Dendritic cell treated with granulocyte-macrophage colony-stimulating factor and Interleukin-4, amounts not matched to agents 40 ng/mL and 50 ng/mL, for 4 days (primary cell): ENCODE measurements at regions of chr9 and their contacts with region 1.

Region 1: DNA sequence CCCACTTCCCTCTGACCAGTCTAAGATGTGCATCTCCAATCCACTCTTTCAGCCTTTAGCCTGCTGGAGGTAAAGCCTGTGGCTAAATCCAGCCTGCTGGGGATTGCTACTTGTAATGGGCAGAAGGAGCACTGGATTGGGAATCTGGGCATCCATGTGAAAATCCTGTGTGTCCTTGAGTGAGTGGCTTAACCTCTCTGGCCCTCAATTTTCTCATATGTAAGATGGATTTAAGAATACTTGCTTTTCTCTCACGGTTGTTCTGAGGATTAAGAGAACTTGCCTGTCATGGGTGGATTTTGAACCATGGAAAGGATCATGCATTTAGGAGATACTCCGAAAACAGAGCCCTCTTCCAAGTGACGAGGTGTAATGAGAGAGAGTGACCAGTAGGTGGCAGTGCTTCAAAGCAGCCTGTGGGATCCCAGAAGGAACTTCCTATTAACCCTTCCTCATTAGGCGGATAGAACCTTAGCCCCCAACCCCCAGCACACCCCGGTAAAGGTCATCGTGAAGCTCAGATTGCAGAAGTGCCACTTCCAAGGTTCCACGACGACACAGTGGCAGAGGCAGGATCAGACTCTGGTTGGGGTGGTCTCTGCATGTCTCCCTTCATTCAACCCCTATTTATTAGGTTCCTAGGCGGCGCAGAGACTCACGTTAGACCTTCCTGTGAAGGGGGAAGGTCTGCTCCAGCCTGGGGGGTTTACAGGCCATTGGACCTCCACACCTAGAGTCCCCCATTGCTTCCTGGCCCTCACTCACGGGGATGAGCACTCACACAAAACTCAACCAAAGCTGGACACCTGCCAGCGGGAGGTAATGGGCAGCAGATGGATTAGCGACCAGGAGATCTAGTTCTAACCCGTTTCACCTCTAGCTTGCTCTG is 68.7 kb upstream of the ZNF618 start:
- H3K4me3 Mint-ChIP-seq: peak overlapping the region; percentile 53
- H3K27ac Mint-ChIP-seq: no peak overlapping the region
- H3K4me1 Mint-ChIP-seq: peaks cover 5% of the 10 kb centered on the region
- H3K27me3 Mint-ChIP-seq: peaks cover 3% of the 10 kb centered on the region

Region 2: GRCh38 chr9:113593682-113594281 is 213.6 kb before region 1 on chr9:
- intact Hi-C with region 1: no loop called
- H3K4me3 Mint-ChIP-seq: peak overlapping the region; percentile 45
- H3K27ac Mint-ChIP-seq: peak overlapping the region; percentile 18
- H3K4me1 Mint-ChIP-seq: peaks cover 46% of the 10 kb centered on the region
- H3K27me3 Mint-ChIP-seq: no peaks in the 10 kb centered on the region

Region 3: GRCh38 chr9:113876151-113876992 is 69.0 kb after region 1 on chr9 and contains the start of gene ZNF618:
- intact Hi-C with region 1: loop called (anchors 1 kb)
- H3K4me3 Mint-ChIP-seq: peak within 1 kb of the TSS; percentile 93
- H3K27ac Mint-ChIP-seq: peak within 1 kb of the TSS; percentile 89
- H3K4me1 Mint-ChIP-seq: peaks cover 10% of the 10 kb centered on the region
- H3K27me3 Mint-ChIP-seq: peaks cover 11% of the 10 kb centered on the region

Region 4: DNA sequence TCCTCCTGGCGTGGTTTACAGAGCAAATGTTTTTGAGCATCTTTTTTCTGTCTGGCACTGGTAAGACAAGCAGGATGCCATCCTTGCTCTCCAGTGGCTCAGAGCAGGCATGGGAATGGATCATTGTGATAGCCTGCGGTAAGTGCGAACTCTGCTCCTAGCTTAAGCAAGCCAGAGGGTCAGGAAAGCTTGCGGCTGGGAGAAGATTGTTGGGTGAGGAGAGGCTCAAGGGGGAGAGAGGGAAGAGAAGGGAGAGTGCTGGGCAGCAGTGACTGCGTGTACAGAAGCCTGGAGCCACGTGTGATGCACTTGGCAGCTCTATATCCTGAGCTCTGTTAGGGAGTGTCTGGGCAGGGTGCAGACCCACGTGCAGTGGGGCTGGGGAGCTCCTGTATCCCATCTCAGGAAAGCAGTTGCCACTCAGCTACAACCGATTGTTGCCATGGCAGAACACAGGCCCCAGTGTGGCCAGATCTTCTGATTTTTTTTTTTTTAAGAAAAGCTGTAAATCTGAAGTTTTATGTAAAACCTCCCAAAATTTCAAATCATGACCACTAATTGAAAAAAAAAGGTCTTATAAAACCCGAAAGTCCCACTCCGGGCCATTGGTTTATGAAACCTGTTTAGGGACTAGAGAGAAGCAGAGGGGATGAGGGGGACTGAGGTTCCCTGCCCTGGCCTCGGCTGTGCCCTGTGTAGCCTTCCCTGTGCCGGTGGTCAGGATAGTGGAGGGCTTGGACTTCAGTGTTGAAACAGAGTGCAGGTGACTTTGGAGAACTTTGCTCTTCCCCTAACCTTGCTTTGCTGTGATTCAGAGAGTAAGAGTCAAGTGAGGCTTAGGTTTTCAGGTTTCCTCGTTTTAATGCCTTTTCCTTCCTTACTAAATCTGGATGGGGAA is 135.9 kb after region 1 on chr9:
- intact Hi-C with region 1: no loop called
- H3K4me3 Mint-ChIP-seq: no peak overlapping the region
- H3K27ac Mint-ChIP-seq: no peak overlapping the region
- H3K4me1 Mint-ChIP-seq: peaks cover 14% of the 10 kb centered on the region
- H3K27me3 Mint-ChIP-seq: no peaks in the 10 kb centered on the region

Region 5: GRCh38 chr9:113963017-113963620 is 155.7 kb after region 1 on chr9:
- intact Hi-C with region 1: loop called (anchors 5 kb)
- H3K4me3 Mint-ChIP-seq: no peak overlapping the region
- H3K27ac Mint-ChIP-seq: no peak overlapping the region
- H3K4me1 Mint-ChIP-seq: no peaks in the 10 kb centered on the region
- H3K27me3 Mint-ChIP-seq: no peaks in the 10 kb centered on the region

Region 6: GRCh38 chr9:114033397-114034103 is 226.1 kb after region 1 on chr9:
- intact Hi-C with region 1: loop called (anchors 2 kb)
- H3K4me3 Mint-ChIP-seq: no peak overlapping the region
- H3K27ac Mint-ChIP-seq: no peak overlapping the region
- H3K4me1 Mint-ChIP-seq: no peaks in the 10 kb centered on the region
- H3K27me3 Mint-ChIP-seq: no peaks in the 10 kb centered on the region